ENCODE measurements at regions of chr12 and their contacts with region 1.

Region 1: GRCh38 chr12:64451687-64452558 is at the start of gene TBK1:
- DNase-seq: peak; percentile 98
- H3K4me3 ChIP-seq: peak within 1 kb of the TSS; percentile 70 to 96 (median 88)
- H3K27ac ChIP-seq: peak within 1 kb of the TSS; percentile 91 to 98 (median 97)
- H3K4me1 ChIP-seq: peaks cover 18 to 61% (median 46%) of the 10 kb centered on the region in 6 donors
- H3K27me3 ChIP-seq: no peaks in the 10 kb centered on the region
- CTCF ChIP-seq: peak in 5 of 11 experiments; percentile 13 to 36 (median 22)
- POLR2A ChIP-seq: peak in 2 of 3 donors; percentile 39 to 48
- total RNA-seq, gene TBK1: 27.5 to 55.2 (median 39.0) TPM

Region 2: GRCh38 chr12:64403707-64404469 is 48.0 kb before region 1 on chr12 and contains the start of gene XPOT:
- intact Hi-C with region 1: loop called (anchors 10 kb)
- DNase-seq: peak; percentile 99
- H3K4me3 ChIP-seq: peak within 1 kb of the TSS; percentile 73 to 97 (median 92)
- H3K27ac ChIP-seq: peak within 1 kb of the TSS; percentile 92 to 98 (median 97)
- H3K4me1 ChIP-seq: peaks cover 6 to 37% (median 18%) of the 10 kb centered on the region in 6 donors
- H3K27me3 ChIP-seq: no peaks in the 10 kb centered on the region
- CTCF ChIP-seq: peak in 2 of 11 experiments; percentile 14
- POLR2A ChIP-seq: peak in 2 of 3 donors; percentile 25 to 36
- total RNA-seq, gene XPOT: 32.0 to 50.3 (median 46.7) TPM